RWPE1 (cell line): ENCODE measurements at regions of chr1 and their contacts with region 1.

Region 1: GRCh38 chr1:25890239-25891034 is 14.9 kb upstream of the PAQR7 start:
- DNase-seq: peak; percentile 93
- H3K27ac ChIP-seq: peak overlapping the region; percentile 99
- CTCF ChIP-seq: no peak

Region 2: GRCh38 chr1:25874934-25875855 is 15.2 kb before region 1 on chr1 and contains the start of gene PAQR7:
- CTCF ChIA-PET with region 1: interaction called, 8 read pairs
- POLR2A ChIA-PET with region 1: interaction called, 18 read pairs
- DNase-seq: peak; percentile 55
- H3K27ac ChIP-seq: peak within 1 kb of the TSS; percentile 95
- CTCF ChIP-seq: no peak

Region 3: GRCh38 chr1:26122988-26123973 is 232.8 kb after region 1 on chr1:
- CTCF ChIA-PET with region 1: interaction called, 10 read pairs
- POLR2A ChIA-PET with region 1: no interaction called
- DNase-seq: peak; percentile 74
- H3K27ac ChIP-seq: no peak overlapping the region
- CTCF ChIP-seq: no peak